GM13977 (cell line): ENCODE measurements at regions of chr19 and their contacts with region 1.

Region 1: GRCh38 chr19:38335949-38336637 is 463 bp downstream of the CATSPERG start:
- DNase-seq: peak; percentile 93
- CTCF ChIP-seq: no peak

Region 2: DNA sequence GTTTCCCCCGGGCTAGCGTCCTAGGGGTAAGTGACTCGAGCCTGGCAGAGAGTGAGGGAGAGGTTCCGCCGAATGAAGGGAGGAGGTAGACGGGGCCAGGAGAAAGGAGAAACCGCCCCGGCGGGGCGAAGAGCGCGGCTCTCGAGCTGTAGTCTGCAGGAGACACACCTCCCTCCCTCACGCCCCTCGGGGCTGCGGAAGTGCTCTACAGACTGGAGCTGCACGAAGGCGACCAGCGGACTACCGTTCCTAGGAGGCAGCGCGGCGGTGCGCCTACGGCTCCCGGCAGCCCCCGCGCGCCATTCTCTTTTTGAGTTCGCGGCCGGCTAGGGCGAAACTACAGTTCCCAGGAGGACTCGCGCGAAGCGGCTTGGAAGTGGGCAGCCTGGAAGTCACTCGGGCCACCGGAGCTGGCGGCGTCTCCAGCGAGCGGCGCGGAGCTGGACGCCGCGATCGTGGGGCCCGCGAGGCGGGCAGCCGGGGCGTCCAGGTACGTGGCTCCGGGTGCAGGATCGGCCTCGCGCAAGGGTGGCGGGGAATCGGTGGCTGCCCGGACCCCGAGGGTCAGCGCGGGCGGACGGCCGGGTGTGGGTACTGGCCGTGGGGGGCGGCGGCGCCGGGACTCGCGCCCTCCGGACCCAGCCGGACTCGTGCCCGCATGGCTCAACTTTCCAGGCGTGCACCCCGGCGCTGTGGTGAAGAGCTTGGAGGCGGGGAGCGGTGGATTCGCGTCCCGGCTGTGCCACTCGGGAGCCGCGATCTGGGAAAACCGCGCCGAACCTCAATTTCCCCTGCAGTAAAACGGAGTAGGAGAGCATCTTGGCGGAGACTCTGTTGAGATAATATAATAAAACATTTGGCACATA is 429.0 kb before region 1 on chr19 and contains the start of gene SIPA1L3:
- in situ Hi-C with region 1: loop called (anchors 25 kb)
- DNase-seq: peak; percentile 95
- CTCF ChIP-seq: no peak

Region 3: GRCh38 chr19:38250821-38251563 is 85.1 kb before region 1 on chr19:
- in situ Hi-C with region 1: loop called (anchors 5 kb)
- DNase-seq: no peak
- CTCF ChIP-seq: no peak

Region 4: GRCh38 chr19:38277969-38278680 is 58.0 kb before region 1 on chr19:
- in situ Hi-C with region 1: no loop called
- DNase-seq: no peak
- CTCF ChIP-seq: no peak